ENCODE measurements at regions of chr3 and their contacts with region 1.

Region 1: DNA sequence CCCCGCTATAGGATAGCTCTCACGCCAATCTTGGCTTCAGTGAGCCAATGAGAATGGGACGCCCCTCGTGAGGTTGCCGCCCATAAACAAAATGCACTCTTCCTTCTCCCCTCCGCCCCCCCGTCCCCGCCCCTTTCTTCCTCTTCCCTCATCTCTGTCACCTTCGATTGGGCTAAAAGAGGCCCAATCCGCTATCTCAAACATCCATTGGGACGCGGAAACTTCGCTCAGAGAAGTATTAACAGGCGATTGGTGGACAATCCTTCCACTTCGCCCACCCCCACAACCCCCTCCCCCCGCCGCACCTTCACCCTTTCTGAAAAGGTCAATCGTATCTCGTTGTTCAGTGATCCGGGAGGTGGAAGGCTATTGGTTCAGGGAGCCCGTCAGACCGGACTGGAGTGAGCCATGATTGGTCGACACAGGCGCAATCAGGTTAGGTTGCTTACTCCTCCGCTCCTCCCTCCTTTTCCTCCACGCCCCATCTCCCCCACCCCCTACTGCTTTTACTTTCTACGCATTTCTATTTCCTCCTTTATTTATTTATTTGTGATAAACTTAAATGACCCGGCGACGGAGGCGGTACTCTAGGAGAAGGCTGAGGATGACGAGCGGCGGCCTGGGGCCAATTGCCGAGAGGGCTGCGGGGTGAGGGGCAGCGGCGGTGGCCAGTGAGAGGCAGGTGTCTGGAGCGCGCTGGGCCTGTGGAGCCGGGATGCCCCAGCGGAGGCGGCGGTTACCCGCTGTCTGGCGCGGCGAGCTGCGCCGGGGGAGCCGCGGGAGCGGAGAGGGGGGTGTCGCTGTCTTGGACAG is 447 bp upstream of the ZBTB20 start:
- DNase-seq: peak; percentile 100
- ATAC-seq: peak; percentile 84
- H3K4me3 ChIP-seq: peak overlapping the region; percentile 82
- H3K27ac ChIP-seq: peak overlapping the region; percentile 81
- H3K4me1 ChIP-seq: no peaks in the 10 kb centered on the region
- H3K27me3 ChIP-seq: no peaks in the 10 kb centered on the region
- CTCF ChIP-seq: no peak
- POLR2A ChIP-seq: peak; percentile 89
- RAD21 ChIP-seq: no peak; the same call in 1 of the 2 replicates

Region 2: GRCh38 chr3:115040673-115041286 is 106.8 kb before region 1 on chr3:
- CTCF ChIA-PET with region 1: no interaction called
- POLR2A ChIA-PET with region 1: interaction called, 3 read pairs
- dilution Hi-C with region 1: no loop called
- in situ Hi-C with region 1: no loop called
- intact Hi-C with region 1: loop called (anchors 5 kb)
- DNase-seq: peak; percentile 52
- ATAC-seq: peak; percentile 65
- H3K4me3 ChIP-seq: no peak overlapping the region
- H3K27ac ChIP-seq: no peak overlapping the region
- H3K4me1 ChIP-seq: peaks cover 2% of the 10 kb centered on the region; the same call in 1 of the 2 replicates
- H3K27me3 ChIP-seq: no peaks in the 10 kb centered on the region
- CTCF ChIP-seq: peak; percentile 72
- POLR2A ChIP-seq: no peak
- RAD21 ChIP-seq: peak; percentile 62

Region 3: GRCh38 chr3:115450036-115450435 is 302.5 kb after region 1 on chr3:
- CTCF ChIA-PET with region 1: no interaction called
- POLR2A ChIA-PET with region 1: no interaction called
- dilution Hi-C with region 1: no loop called
- in situ Hi-C with region 1: no loop called
- intact Hi-C with region 1: no loop called
- DNase-seq: no peak
- ATAC-seq: no peak
- H3K4me3 ChIP-seq: no peak overlapping the region
- H3K27ac ChIP-seq: no peak overlapping the region
- H3K4me1 ChIP-seq: no peaks in the 10 kb centered on the region
- H3K27me3 ChIP-seq: no peaks in the 10 kb centered on the region
- CTCF ChIP-seq: no peak
- POLR2A ChIP-seq: no peak
- RAD21 ChIP-seq: no peak

Region 4: DNA sequence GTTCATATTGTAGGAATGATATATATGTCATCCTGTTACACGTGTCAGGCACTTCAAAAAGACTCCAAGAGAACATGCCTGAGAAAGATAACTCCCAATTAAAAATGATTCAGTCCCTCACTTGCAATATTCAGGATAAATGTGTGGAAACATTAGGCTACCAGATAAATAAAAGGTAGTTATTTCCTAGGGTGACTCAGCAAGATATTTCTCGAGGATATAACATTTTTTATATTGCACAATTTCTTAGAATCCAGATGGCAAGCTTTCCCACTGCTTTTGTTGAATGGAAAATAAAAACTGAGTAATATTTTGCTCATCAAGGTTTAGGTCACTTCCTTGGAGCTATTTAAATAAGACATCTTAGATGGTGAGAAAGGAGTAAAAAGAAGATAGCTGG is 657.2 kb after region 1 on chr3:
- CTCF ChIA-PET with region 1: no interaction called
- POLR2A ChIA-PET with region 1: interaction called, 17 read pairs
- dilution Hi-C with region 1: no loop called
- in situ Hi-C with region 1: no loop called
- intact Hi-C with region 1: no loop called
- DNase-seq: peak; percentile 93
- ATAC-seq: peak; percentile 45
- H3K4me3 ChIP-seq: no peak overlapping the region
- H3K27ac ChIP-seq: peak overlapping the region; percentile 85
- H3K4me1 ChIP-seq: peaks cover 19% of the 10 kb centered on the region
- H3K27me3 ChIP-seq: no peaks in the 10 kb centered on the region
- CTCF ChIP-seq: no peak
- POLR2A ChIP-seq: no peak
- RAD21 ChIP-seq: no peak